Activated T-helper 1 cell treated with anti-CD3 and anti-CD28 coated beads, Interleukin-12 subunit alpha, Interleukin-12 subunit beta, Interleukin-2, Interleukin-4 antibody, amounts not matched to agents 30 ng/mL and 10 ng/mL and 1 ng/mL, durations not matched to agents 14 hours and 24 hours and 36 hours (primary cell): ENCODE measurements at regions of chr1 and their contacts with region 1.

Region 1: DNA sequence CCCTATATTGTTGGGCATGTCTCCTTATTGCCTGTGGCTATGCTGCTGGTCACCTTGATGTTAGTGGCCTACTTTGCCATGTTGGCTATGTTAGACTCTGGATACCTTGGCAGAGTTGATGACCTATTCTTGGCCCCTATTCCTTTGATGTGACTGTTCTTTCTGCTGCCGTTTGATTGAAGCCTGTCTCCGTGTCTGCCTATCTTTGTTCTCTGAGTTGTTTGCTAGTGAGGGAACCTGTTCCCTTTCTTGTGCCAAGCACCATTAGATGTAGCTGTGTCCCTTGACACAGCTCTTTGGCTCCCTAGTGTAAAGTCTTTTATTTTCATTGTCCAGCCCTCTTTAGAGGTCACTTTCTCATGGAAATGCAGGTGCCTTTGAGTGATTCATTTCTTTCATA is 28.7 kb upstream of the PAPPA2 start:
- DNase-seq: no peak
- H3K4me3 Mint-ChIP-seq: no peak overlapping the region
- H3K27ac Mint-ChIP-seq: no peak overlapping the region
- H3K4me1 Mint-ChIP-seq: no peaks in the 10 kb centered on the region
- H3K27me3 Mint-ChIP-seq: no peaks in the 10 kb centered on the region

Region 2: GRCh38 chr1:175530183-175530582 is 904.1 kb before region 1 on chr1:
- intact Hi-C with region 1: loop called (anchors 5 kb)
- DNase-seq: no peak
- H3K4me3 Mint-ChIP-seq: no peak overlapping the region
- H3K27ac Mint-ChIP-seq: no peak overlapping the region
- H3K4me1 Mint-ChIP-seq: no peaks in the 10 kb centered on the region
- H3K27me3 Mint-ChIP-seq: peaks cover 8% of the 10 kb centered on the region

Region 3: DNA sequence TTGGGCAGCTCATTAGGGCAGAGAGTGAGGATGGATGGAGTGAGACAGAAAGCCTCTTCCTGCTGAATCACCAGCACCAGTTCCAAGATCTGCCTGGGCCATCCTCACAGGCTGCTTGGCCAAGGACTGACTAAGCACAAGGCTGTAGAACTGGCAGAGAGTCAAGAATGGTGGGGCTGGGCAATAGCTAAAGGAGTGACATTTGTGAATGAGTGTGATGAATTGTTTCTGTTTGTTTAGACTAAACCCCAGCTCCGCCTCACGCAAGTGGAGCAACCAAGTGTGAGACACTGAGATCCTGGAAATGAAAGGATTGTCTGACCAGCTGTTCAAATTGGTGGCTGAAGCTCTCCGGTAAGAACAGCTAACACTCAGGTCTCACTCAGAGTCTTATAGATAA is 775.1 kb after region 1 on chr1:
- intact Hi-C with region 1: no loop called
- DNase-seq: no peak
- H3K4me3 Mint-ChIP-seq: no peak overlapping the region
- H3K27ac Mint-ChIP-seq: no peak overlapping the region
- H3K4me1 Mint-ChIP-seq: no peaks in the 10 kb centered on the region
- H3K27me3 Mint-ChIP-seq: no peaks in the 10 kb centered on the region